ENCODE measurements at regions of chr9 and their contacts with region 1.

Region 1: GRCh38 chr9:35616681-35617459 is 1.3 kb downstream of the CD72 start:
- DNase-seq: peak; percentile 79
- H3K4me3 Mint-ChIP-seq: peak overlapping the region; percentile 80
- H3K27ac Mint-ChIP-seq: peak overlapping the region; percentile 79
- H3K4me1 Mint-ChIP-seq: peaks cover 49% of the 10 kb centered on the region
- H3K27me3 Mint-ChIP-seq: peaks cover 27% of the 10 kb centered on the region

Region 2: GRCh38 chr9:35639631-35640030 is 22.8 kb after region 1 on chr9:
- CTCF ChIA-PET with region 1: interaction called, 81 read pairs
- DNase-seq: no peak
- H3K4me3 Mint-ChIP-seq: peak overlapping the region; percentile 23
- H3K27ac Mint-ChIP-seq: peak overlapping the region; percentile 88
- H3K4me1 Mint-ChIP-seq: peaks cover 69% of the 10 kb centered on the region
- H3K27me3 Mint-ChIP-seq: no peaks in the 10 kb centered on the region

Region 3: GRCh38 chr9:35657546-35658136 is 40.8 kb after region 1 on chr9 and contains the start of gene RMRP:
- CTCF ChIA-PET with region 1: interaction called, 41 read pairs
- DNase-seq: peak; percentile 91
- H3K4me3 Mint-ChIP-seq: peak within 1 kb of the TSS; percentile 81
- H3K27ac Mint-ChIP-seq: peak within 1 kb of the TSS; percentile 96
- H3K4me1 Mint-ChIP-seq: peaks cover 69% of the 10 kb centered on the region
- H3K27me3 Mint-ChIP-seq: peaks cover 18% of the 10 kb centered on the region

Region 4: DNA sequence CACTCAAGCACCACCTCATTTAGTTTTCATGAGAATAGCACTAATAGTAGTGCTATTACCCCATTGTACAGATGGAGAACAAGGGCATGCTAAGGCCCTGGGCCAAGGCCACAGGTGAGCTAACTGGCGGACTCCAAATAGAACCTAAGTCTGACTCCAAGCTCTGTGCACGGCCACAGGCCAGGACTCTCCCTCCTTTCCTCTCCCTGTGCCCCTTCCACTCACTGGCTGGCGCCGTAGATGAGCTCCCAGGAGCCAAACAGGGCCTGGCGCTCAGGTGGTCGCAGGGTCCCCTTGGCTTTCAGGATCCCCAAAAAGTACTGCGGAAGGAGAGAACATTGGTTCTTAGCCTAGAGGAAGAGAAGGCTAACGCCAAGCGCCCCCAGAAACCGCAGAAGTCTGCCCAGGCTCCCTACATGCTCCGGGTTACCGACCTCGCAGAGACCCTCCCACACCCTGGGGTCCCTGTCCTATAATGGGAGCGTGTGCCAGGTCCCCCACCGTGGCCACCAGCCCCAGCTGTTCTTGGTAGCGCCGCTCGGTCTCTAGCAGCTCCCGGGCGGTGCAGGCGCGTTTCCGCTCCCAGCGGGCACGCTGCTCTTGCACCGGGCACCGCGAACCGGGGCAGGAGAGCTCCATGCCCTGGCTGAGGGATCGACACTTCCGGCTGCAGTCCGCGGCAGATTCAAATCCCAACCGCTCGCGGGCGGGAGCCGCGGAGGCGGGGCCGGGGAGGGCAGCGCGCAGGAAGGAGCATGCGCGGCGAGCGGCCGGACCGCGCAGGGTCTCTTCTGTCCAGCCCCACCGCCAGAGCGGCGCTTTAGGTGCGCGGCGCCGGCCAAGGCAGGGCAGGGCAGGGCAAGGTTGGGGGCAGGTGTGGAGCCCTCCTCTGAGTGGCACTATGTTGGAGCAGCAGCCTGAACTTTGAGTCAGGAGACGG is 47.9 kb after region 1 on chr9 and contains the start of gene ARHGEF39:
- CTCF ChIA-PET with region 1: interaction called, 41 read pairs
- DNase-seq: peak; percentile 85
- H3K4me3 Mint-ChIP-seq: peak within 1 kb of the TSS; percentile 87
- H3K27ac Mint-ChIP-seq: peak within 1 kb of the TSS; percentile 84
- H3K4me1 Mint-ChIP-seq: peaks cover 65% of the 10 kb centered on the region
- H3K27me3 Mint-ChIP-seq: no peaks in the 10 kb centered on the region